ENCODE measurements at regions of chr4 and their contacts with region 1.

Region 1: DNA sequence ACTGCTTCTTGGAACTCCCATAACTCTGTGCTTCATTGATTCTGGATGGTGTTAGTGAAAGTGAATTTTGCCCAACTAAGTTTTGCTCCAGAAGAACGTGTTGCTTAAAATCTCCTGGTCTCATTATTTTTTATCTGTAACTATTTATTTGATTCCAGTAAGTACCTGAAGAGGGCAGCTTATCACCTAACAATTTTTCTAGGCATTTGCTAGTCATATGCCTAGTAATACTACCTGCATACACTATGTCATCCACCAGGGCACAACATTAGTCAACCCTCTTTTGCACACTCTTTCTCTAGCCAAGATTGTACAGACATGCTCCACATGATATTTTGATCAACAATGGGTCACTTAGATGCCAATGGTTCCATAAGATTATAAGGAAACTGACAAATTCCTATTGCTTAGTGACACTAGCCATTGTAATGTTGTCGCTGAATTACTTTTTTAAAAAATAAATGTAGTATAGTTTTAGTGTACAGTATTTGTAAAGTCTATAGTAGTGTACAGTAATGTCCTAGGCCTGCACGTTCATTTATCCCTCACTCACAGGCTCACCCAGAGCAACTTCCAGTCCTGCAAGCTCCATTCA is 499.9 kb upstream of the AADAT start:
- DNase-seq: peak; percentile 26
- CTCF ChIP-seq: peak; percentile 38

Region 2: GRCh38 chr4:170853422-170854021 is 263.8 kb after region 1 on chr4:
- in situ Hi-C with region 1: loop called (anchors 25 kb)
- DNase-seq: peak; percentile 9
- CTCF ChIP-seq: peak; percentile 86

Measured in GM13977 (cell line).